Tibial artery (tissue), 4 donors: ENCODE measurements at regions of chr4 and their contacts with region 1.

Region 1: GRCh38 chr4:109433205-109434006 is at the start of gene SEC24B:
- DNase-seq: peak; percentile 87 to 93
- H3K4me3 ChIP-seq: peak within 1 kb of the TSS; percentile 80
- H3K27ac ChIP-seq: peak within 1 kb of the TSS; percentile 92 to 93
- H3K4me1 ChIP-seq: peaks cover 0 to 52% (median 26%) of the 10 kb centered on the region in 4 donors
- H3K27me3 ChIP-seq: no peaks in the 10 kb centered on the region
- CTCF ChIP-seq: peak; percentile 73 to 91

Region 2: GRCh38 chr4:109559983-109560686 is 126.7 kb after region 1 on chr4 and contains the start of gene MCUB:
- intact Hi-C with region 1: loop called (anchors 10 kb)
- DNase-seq: peak; percentile 85 to 88
- H3K4me3 ChIP-seq: peak within 1 kb of the TSS; percentile 59 to 68
- H3K27ac ChIP-seq: peak within 1 kb of the TSS; percentile 73 to 75
- H3K4me1 ChIP-seq: peaks cover 0 to 13% (median 9%) of the 10 kb centered on the region in 4 donors
- H3K27me3 ChIP-seq: no peaks in the 10 kb centered on the region
- CTCF ChIP-seq: no peak

Region 3: GRCh38 chr4:109815151-109816081 is 382.0 kb after region 1 on chr4 and contains the start of gene GAR1:
- intact Hi-C with region 1: loop called (anchors 5 kb)
- DNase-seq: peak; percentile 89 to 91
- H3K4me3 ChIP-seq: peak within 1 kb of the TSS; percentile 69 to 87
- H3K27ac ChIP-seq: peak within 1 kb of the TSS; percentile 79 to 82
- H3K4me1 ChIP-seq: peaks cover 0 to 18% (median 12%) of the 10 kb centered on the region in 4 donors
- H3K27me3 ChIP-seq: no peaks in the 10 kb centered on the region
- CTCF ChIP-seq: no peak